Ascending aorta (tissue), 2 donors: ENCODE measurements at regions of chr5 and their contacts with region 1.

Region 1: DNA sequence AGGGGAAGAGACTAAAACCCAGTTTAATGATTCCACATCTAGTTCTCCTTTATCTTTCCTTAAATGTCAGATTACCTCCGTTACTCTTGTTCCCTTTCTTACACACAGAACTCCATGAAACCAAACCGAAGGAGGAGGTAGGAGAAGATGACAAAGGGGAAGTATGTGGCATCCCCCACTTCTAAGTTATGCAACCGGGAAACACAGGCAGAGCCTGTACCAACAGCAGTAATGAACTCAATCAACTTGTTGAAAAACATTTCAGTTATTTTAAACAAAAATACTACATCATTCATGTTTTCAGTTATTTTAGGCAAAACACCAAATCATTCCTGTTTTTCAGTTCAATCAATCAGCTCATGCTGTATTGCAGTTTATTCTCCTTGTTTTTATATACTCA is 101.8 kb downstream of the PCSK1 start:
- DNase-seq: no peak
- H3K4me3 ChIP-seq: no peak overlapping the region
- H3K27ac ChIP-seq: no peak overlapping the region
- H3K4me1 ChIP-seq: peaks cover 5 to 34% of the 10 kb centered on the region in 2 donors
- H3K27me3 ChIP-seq: no peaks in the 10 kb centered on the region
- CTCF ChIP-seq: no peak

Region 2: GRCh38 chr5:95949810-95950209 is 381.4 kb before region 1 on chr5:
- intact Hi-C with region 1: no loop called
- DNase-seq: no peak
- H3K4me3 ChIP-seq: no peak overlapping the region
- H3K27ac ChIP-seq: no peak overlapping the region
- H3K4me1 ChIP-seq: peaks cover 0 to 36% of the 10 kb centered on the region in 2 donors
- H3K27me3 ChIP-seq: no peaks in the 10 kb centered on the region
- CTCF ChIP-seq: no peak

Region 3: DNA sequence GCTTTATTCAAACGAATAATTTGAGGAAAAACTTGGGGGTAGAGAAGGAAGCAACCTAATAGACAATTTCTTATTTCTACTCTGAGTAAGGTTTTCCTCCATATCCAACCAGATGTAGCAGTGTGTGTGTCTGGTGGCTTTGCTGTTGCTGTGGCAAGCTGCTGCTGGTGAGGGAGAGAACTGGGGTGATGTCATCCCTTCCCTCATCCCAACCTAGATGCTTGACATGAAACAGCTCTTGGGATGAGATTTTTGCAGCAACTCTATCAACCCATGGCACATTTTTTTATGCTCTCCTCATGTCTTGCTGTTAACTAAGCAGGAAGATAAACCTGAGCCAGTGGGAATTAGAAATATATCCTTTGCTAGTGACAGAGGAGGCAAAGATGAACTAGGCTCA is 33.9 kb before region 1 on chr5:
- intact Hi-C with region 1: loop called (anchors 5 kb)
- DNase-seq: no peak
- H3K4me3 ChIP-seq: no peak overlapping the region
- H3K27ac ChIP-seq: peak overlapping the region; percentile 54 to 56
- H3K4me1 ChIP-seq: peaks cover 3 to 13% of the 10 kb centered on the region in 2 donors
- H3K27me3 ChIP-seq: no peaks in the 10 kb centered on the region
- CTCF ChIP-seq: no peak